ENCODE measurements at regions of chr9 and their contacts with region 1.

Region 1: GRCh38 chr9:7037176-7037575 is 279.4 kb downstream of the KDM4C start:
- DNase-seq: no peak
- ATAC-seq: no peak
- H3K4me3 ChIP-seq: no peak overlapping the region
- H3K27ac ChIP-seq: no peak overlapping the region
- H3K4me1 ChIP-seq: peaks cover 0 to 5% (median 0%) of the 10 kb centered on the region in 12 donors
- H3K27me3 ChIP-seq: no peaks in the 10 kb centered on the region
- CTCF ChIP-seq: no peak
- POLR2A ChIP-seq: no peak

Region 2: DNA sequence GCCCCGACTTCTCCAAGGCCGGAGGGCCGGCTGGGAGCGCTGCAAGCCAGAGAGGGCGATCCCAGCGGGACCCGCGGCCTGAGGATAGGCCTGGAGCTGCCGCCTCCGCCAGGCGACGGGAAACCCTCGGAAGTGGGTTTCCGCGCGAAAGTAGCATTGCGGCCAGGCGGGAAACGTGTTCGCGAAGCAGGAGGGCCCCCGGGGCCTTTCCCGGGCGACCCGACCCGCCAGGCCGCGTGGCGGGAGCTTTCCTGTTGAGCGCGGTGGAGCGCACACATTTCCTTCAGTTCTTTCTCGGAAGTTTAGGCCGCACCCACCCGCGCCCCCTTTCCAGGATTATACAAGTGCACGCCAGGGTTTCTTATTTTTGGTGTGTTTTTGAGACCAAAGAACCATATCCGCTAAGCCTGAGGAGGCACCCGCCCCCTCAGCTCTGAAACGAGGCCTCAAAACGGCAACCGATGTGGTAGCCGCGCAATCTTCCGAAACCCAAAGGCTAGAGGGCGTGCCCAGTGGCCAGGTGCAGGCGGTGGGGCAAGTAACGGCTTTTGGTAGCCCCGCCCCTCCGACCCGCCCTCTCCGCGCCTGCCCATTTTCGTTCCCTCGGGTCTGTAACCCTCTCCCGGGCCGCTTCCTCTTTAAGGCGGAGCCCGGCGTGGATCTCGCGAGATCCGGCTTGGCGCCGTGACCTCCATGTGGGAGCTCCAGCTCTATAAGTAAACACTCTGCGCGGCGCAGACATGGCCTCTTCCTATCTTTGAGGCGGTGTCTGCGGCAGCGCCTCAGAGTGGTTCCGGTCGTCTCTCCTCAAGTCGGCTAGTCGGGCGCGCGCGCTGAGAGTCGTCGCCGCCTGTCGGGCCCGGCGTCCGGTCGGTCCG is 624.5 kb before region 1 on chr9 and contains the start of gene UHRF2:
- intact Hi-C with region 1: no loop called
- DNase-seq: peak; percentile 98 to 100 (median 99)
- ATAC-seq: peak; percentile 98 to 99 (median 99)
- H3K4me3 ChIP-seq: peak within 1 kb of the TSS; percentile 66 to 98 (median 95)
- H3K27ac ChIP-seq: peak within 1 kb of the TSS; percentile 69 to 98 (median 91)
- H3K4me1 ChIP-seq: peaks cover 0 to 37% (median 16%) of the 10 kb centered on the region in 12 donors
- H3K27me3 ChIP-seq: peaks cover 0 to 5% (median 0%) of the 10 kb centered on the region in 9 donors
- CTCF ChIP-seq: peak in 1 of 12 donors; percentile 17
- POLR2A ChIP-seq: peak in 1 of 2 donors; percentile 70
- total RNA-seq, gene UHRF2: 12.2 to 20.6 (median 17.1) TPM

Region 3: GRCh38 chr9:6845880-6846279 is 191.3 kb before region 1 on chr9:
- intact Hi-C with region 1: loop called in 1 of 10 experiments (anchors 5 kb)
- DNase-seq: no peak
- ATAC-seq: peak in 3 of 4 donors; percentile 63 to 83 (median 68)
- H3K4me3 ChIP-seq: no peak overlapping the region
- H3K27ac ChIP-seq: no peak overlapping the region
- H3K4me1 ChIP-seq: peaks cover 0 to 12% (median 0%) of the 10 kb centered on the region in 12 donors
- H3K27me3 ChIP-seq: no peaks in the 10 kb centered on the region
- CTCF ChIP-seq: peak in 10 of 12 donors; percentile 23 to 52 (median 36)
- POLR2A ChIP-seq: no peak